GM13977 (cell line): ENCODE measurements at regions of chr9 and their contacts with region 1.

Region 1: DNA sequence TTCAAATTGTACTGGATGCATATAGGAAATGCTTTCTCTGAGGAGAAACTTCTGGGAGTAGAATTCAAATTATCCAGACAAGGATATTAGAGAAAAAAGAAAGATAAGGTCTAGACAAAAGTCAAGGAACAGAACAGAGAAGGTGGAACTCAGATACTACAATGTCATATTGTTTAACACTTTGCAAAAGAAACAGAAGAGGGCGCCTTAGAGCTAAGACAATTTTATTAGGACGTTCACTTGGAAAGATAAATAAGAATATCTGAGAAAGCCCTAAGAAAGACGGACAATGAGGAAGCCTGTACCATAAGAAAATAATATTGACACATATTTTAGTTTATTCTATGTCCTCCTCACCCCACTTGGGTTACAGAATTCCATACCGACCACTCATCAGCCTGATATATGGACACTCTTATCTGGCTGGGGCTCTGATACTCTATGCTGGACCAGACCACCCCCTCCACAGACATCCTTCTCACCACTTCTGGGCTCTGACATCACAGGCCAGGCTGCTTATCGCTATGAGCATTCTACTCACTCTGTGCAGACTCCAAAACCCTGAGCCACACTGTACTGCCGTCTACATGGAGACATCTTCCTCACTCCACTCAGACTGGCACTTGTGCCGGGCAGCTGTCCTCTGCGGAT is 9.1 kb upstream of the AK3 start:
- DNase-seq: peak; percentile 40
- CTCF ChIP-seq: peak; percentile 64

Region 2: DNA sequence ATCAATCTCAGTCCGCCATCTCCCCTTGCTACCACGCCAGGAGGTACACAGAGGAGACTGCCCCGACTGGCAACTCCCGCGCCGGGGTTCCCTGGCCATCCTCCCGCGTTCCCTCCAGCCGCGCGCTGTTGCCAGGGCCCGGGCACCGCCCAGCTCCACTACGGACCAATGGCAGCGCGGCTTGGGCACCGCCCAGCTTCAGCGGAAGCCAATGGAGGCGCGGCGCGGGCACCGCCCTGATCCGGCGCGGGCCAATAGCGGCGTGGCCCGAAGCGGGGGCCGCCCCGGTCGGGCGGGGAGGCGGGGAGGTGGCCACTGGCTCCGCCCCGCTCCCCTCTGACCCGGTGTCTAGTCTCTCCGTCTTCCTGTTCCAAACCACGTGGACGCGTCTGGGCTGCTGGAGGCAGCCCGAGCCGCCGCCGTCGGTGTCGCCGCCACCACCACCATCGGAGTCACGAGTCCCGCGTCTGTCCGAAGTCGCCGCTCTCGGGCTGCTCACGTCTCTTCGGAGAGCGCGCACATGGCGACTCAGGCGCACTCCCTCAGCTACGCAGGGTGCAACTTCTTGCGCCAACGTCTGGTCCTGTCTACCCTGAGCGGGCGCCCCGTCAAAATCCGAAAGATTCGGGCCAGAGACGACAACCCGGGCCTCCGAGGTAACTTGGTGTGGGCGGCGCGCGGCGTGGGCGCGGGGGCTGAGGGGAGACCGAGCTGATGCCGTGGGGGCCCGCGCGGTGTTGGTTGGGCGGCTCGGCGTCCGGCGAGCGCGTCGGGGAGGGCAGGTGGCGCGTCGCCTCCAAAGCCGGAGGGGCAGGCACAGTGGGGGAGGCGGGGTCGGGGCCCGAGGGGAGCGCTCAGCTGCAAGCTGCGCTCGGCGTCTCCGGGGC is 42.7 kb after region 1 on chr9 and contains the start of gene RCL1:
- in situ Hi-C with region 1: no loop called
- DNase-seq: peak; percentile 98
- CTCF ChIP-seq: no peak

Region 3: DNA sequence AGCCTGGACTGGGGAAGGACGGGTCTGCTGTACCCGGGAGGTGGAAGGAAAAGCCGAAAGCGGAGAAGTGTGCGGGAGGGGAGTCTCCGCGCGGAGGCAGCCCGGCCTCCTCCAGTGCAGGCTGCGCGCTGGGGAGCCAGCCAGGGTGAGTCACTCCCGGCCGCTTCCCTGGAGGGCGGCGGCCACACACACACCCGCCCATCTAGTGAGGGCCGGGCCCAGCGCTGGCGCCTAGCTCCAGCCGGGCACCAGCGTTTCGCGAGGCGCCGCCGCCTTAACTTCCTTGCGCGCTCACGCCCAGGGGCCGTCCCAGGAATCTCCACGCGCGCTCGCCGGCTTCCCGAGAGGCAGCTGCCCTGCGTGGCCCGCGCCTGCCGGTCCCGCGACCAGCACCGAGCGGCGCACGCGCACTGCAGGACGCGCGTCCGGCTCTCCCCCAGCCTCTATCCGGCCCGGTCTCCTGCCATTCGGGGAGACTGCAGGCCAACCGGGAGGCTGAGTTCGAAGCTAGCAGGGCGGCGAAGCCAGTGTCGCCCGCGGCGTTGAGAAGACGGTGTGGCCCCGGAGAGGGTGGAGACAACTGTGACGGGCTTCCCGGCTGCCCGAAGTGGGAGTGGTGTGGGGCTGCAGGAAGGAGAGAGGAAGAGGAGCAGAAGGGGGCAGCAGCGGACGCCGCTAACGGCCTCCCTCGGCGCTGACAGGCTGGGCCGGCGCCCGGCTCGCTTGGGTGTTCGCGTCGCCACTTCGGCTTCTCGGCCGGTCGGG is 234.7 kb after region 1 on chr9 and contains the start of gene JAK2:
- in situ Hi-C with region 1: loop called (anchors 10 kb)
- DNase-seq: peak; percentile 82
- CTCF ChIP-seq: peak; percentile 61

Region 4: GRCh38 chr9:5608298-5609225 is 858.4 kb after region 1 on chr9:
- in situ Hi-C with region 1: loop called (anchors 10 kb)
- DNase-seq: no peak
- CTCF ChIP-seq: peak; percentile 40